PC-3 (cell line): ENCODE measurements at regions of chr17 and their contacts with region 1.

Region 1: DNA sequence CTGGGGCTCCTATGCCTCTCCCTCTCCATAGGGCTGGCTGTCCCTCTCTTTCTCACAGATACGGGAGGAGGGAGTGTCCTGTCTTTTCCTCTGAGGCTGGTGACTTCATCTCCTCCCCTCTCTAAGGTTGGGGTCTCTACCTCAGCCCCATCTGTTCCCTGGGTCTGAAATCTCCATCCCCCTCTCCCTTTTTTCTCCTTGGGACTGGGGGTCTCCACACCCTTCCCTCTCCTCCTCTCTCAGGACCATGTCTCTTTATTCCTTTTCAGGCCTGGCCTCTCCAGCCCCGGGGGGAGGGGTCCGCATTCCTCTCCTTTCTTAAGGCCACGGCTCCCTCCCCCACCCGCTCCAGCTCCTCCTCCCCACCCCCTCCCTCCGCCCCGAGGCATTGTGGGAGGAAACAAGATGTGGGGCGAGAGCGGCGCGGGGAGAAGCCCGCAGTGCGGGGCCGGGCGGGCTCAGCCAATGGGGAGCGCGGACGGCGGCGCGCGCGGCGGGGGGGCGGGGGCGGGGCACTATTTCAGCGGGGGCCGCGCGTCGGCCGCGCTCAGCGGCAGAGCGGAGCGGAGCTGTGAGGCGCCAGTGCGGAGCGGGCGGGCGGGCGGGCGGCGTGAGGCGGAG is at the start of gene DYNLL2:
- DNase-seq: peak; percentile 93
- ATAC-seq: peak; percentile 86
- H3K4me3 ChIP-seq: peak within 1 kb of the TSS; percentile 97
- H3K27ac ChIP-seq: no peak within 1 kb of the TSS
- H3K4me1 ChIP-seq: peaks cover 22% of the 10 kb centered on the region
- H3K27me3 ChIP-seq: 0 out of 2 replicates have a peak, but pooled peaks cover 3% of the 10 kb centered on the region
- CTCF ChIP-seq: no peak
- total RNA-seq, gene DYNLL2: 38.0 and 50.3 TPM in 2 replicates

Region 2: GRCh38 chr17:57861000-57861789 is 221.8 kb before region 1 on chr17:
- CTCF ChIA-PET with region 1: no interaction called
- POLR2A ChIA-PET with region 1: interaction called, 16 read pairs
- intact Hi-C with region 1: no loop called
- DNase-seq: peak; percentile 50
- ATAC-seq: peak; percentile 30
- H3K4me3 ChIP-seq: peak overlapping the region; percentile 63
- H3K27ac ChIP-seq: peak overlapping the region; percentile 8
- H3K4me1 ChIP-seq: peaks cover 27% of the 10 kb centered on the region
- H3K27me3 ChIP-seq: no peaks in the 10 kb centered on the region
- CTCF ChIP-seq: no peak

Region 3: GRCh38 chr17:58046239-58047094 is 36.5 kb before region 1 on chr17:
- CTCF ChIA-PET with region 1: no interaction called
- POLR2A ChIA-PET with region 1: interaction called, 18 read pairs
- intact Hi-C with region 1: no loop called
- DNase-seq: no peak
- ATAC-seq: no peak
- H3K4me3 ChIP-seq: no peak overlapping the region
- H3K27ac ChIP-seq: no peak overlapping the region
- H3K4me1 ChIP-seq: no peaks in the 10 kb centered on the region
- H3K27me3 ChIP-seq: peaks cover 17% of the 10 kb centered on the region
- CTCF ChIP-seq: no peak

Region 4: DNA sequence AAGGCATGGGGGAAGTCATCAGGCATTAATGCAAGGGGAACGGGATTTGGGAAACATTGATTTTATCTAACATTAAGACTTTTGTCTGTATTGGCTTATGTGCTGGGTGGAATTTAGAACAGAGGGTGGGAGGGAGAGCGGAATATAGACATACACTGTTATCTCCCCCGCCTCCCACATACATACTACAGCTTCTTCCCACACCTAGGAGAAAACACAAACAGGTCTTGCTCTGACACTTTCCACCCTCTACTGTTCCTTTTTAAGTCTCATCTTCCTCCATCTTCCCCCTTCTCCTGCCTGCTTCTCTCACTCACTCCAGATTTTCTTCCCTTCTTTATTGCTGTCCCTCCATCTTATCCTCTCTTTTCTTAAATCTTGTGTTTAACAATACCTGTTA is 65.6 kb after region 1 on chr17:
- CTCF ChIA-PET with region 1: no interaction called
- POLR2A ChIA-PET with region 1: no interaction called
- intact Hi-C with region 1: no loop called
- DNase-seq: no peak
- ATAC-seq: no peak
- H3K4me3 ChIP-seq: no peak overlapping the region
- H3K27ac ChIP-seq: no peak overlapping the region
- H3K4me1 ChIP-seq: no peaks in the 10 kb centered on the region
- H3K27me3 ChIP-seq: peaks cover 92% of the 10 kb centered on the region
- CTCF ChIP-seq: no peak

Region 5: GRCh38 chr17:58786613-58787295 is 703.8 kb after region 1 on chr17:
- CTCF ChIA-PET with region 1: no interaction called
- POLR2A ChIA-PET with region 1: interaction called, 15 read pairs
- intact Hi-C with region 1: no loop called
- DNase-seq: peak; percentile 56
- ATAC-seq: peak; percentile 9; the same call in 1 of the 2 replicates
- H3K4me3 ChIP-seq: no peak overlapping the region
- H3K27ac ChIP-seq: no peak overlapping the region
- H3K4me1 ChIP-seq: peaks cover 4% of the 10 kb centered on the region
- H3K27me3 ChIP-seq: peaks cover 31% of the 10 kb centered on the region
- CTCF ChIP-seq: no peak